K562 (cell line): ENCODE measurements at regions of chrX and their contacts with region 1.

Region 1: GRCh38 chrX:66022632-66023384 is 17.1 kb downstream of the VSIG4 start:
- DNase-seq: peak; percentile 45 to 73 (median 52)
- ATAC-seq: peak; percentile 62
- H3K4me3 ChIP-seq: no peak overlapping the region
- H3K27ac ChIP-seq: peak overlapping the region; percentile 52
- H3K4me1 ChIP-seq: peaks cover 13 to 54% of the 10 kb centered on the region in 2 experiments
- H3K27me3 ChIP-seq: no peaks in the 10 kb centered on the region
- CTCF ChIP-seq: peak; percentile 65 to 78 (median 72); a peak in 5 of 6 replicates
- EP300 ChIP-seq: peak; percentile 11; the same call in 1 of the 2 replicates
- POLR2A ChIP-seq: peak; percentile 57
- RAD21 ChIP-seq: peak; percentile 63 to 75

Region 2: DNA sequence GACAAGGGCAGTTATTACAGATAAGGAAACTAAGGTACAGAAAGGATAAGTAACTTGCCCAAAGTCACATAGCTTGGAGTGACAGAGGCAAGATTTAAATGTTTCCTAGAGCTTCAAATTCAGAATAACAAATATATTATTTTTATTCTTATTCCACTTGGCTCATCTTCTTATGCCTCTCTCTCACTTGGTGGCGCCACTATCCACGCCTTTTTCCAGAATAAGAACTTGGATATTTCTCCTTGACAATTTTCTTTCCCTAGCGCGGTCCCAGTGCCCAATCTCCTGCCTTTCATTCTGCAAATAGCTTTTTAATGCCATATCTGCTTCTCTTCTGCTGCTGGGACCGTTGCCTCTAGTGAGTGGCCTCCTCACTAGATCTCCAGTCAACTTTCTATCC is 276.8 kb before region 1 on chrX:
- CTCF ChIA-PET with region 1: no interaction called
- POLR2A ChIA-PET with region 1: no interaction called
- in situ Hi-C with region 1: no loop called
- intact Hi-C with region 1: loop called (anchors 1 kb)
- DNase-seq: peak in 1 of 4 experiments; percentile 56
- ATAC-seq: peak; percentile 63
- H3K4me3 ChIP-seq: no peak overlapping the region
- H3K27ac ChIP-seq: no peak overlapping the region
- H3K4me1 ChIP-seq: no peaks in the 10 kb centered on the region; a peak in 1 of 5 replicates
- H3K27me3 ChIP-seq: no peaks in the 10 kb centered on the region
- CTCF ChIP-seq: peak; percentile 39 to 68 (median 40); a peak in 4 of 6 replicates
- EP300 ChIP-seq: no peak
- POLR2A ChIP-seq: no peak
- RAD21 ChIP-seq: peak; percentile 53 to 71

Region 3: GRCh38 chrX:65900850-65901844 is 121.7 kb before region 1 on chrX:
- CTCF ChIA-PET with region 1: no interaction called
- POLR2A ChIA-PET with region 1: no interaction called
- in situ Hi-C with region 1: no loop called
- intact Hi-C with region 1: no loop called
- DNase-seq: no peak
- ATAC-seq: no peak
- H3K4me3 ChIP-seq: no peak overlapping the region
- H3K27ac ChIP-seq: no peak overlapping the region
- H3K4me1 ChIP-seq: no peaks in the 10 kb centered on the region; a peak in 1 of 5 replicates
- H3K27me3 ChIP-seq: no peaks in the 10 kb centered on the region
- CTCF ChIP-seq: no peak
- EP300 ChIP-seq: no peak
- POLR2A ChIP-seq: no peak
- RAD21 ChIP-seq: no peak

Region 4: DNA sequence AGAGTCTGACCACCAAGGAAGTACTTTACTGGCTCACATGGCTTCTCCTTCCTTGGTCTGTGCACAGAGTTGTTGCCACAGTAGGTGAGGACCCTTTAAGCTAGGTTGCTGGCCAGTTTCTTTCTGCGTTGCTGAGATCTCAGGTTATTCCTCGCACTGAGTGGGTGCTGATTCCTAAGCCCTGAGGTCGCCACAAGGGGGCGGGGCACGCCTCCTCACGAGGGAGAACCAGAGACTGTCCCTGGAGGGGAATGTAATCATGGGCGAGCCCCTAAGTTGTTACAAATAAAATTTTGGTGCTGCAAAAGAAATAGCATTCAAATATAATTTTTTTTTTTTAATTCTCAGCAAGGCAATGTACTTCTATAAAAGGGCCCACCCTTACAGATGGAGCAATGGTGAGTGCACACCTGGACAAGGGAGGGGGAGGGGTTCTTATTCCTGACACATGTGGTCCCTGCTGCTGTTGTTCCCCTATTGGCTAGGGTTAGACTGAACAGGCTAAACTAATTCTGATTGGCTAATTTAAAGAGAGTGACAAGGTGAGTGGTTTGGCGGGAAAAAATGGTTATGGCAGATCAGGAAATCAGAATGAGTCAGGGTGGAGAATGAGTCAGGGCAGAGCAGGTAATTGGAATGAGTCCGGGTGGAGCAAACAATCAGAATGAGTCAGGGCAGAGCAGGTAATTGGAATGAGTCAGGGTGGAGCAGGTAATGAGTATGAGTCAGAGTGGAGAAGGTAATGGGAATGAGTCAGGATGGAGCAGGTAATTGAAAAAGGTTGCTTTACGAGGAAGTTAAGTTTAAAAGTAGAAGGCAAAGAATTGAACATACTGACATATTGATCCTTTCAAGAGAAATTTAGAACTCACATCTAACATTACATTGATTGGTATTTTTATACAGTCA is 90.4 kb before region 1 on chrX:
- CTCF ChIA-PET with region 1: no interaction called
- POLR2A ChIA-PET with region 1: no interaction called
- in situ Hi-C with region 1: no loop called
- intact Hi-C with region 1: loop called (anchors 2 kb)
- DNase-seq: peak in 3 of 4 experiments; percentile 9 to 67 (median 17)
- ATAC-seq: peak; percentile 97
- H3K4me3 ChIP-seq: no peak overlapping the region
- H3K27ac ChIP-seq: no peak overlapping the region; the same call in 2 of the 3 replicates
- H3K4me1 ChIP-seq: no peaks in the 10 kb centered on the region; a peak in 1 of 5 replicates
- H3K27me3 ChIP-seq: no peaks in the 10 kb centered on the region
- CTCF ChIP-seq: peak; percentile 38 to 55 (median 39); a peak in 4 of 6 replicates
- EP300 ChIP-seq: no peak
- POLR2A ChIP-seq: no peak
- RAD21 ChIP-seq: peak; percentile 17 to 55; a peak in 2 of 4 replicates

Region 5: DNA sequence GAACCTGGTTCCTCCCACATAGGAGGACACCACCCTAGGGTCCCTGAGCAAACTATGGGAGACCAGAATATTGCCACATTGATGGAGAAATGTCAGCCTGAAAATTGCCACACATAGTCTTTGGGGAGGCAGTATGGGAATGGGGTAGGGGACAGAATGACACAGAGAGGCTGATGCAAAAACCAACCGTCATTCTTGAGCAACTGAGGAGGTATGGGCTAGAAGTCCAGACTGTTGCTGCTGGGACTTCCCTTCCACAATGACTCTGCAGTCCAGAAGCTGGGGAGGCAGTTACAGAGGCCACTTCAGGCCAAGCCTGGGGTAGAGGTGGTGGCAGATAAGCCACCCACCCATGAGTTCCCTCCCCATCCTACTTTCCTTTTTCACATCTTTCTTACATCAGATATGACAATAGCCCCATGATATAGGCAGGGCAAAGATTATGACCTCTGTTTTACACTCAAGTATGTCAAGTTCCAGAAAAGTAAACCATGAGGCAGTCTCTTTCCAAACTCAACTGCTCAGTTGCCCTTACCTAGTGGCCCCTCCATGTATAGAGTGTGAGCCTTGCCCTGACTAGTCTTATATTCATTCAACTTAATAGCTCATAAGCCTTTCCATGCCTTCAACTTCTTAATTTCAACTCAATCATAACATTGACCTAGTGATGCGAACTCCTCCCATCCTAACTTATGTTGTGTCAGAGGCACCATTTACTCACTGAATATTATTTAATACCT is 24.7 kb before region 1 on chrX:
- CTCF ChIA-PET with region 1: no interaction called
- POLR2A ChIA-PET with region 1: interaction called, 49 read pairs
- in situ Hi-C with region 1: no loop called
- intact Hi-C with region 1: no loop called
- DNase-seq: peak; percentile 81 to 94 (median 84)
- ATAC-seq: peak; percentile 80
- H3K4me3 ChIP-seq: no peak overlapping the region
- H3K27ac ChIP-seq: peak overlapping the region; percentile 99
- H3K4me1 ChIP-seq: peaks cover 5 to 78% of the 10 kb centered on the region in 2 experiments; a peak in 4 of 5 replicates
- H3K27me3 ChIP-seq: no peaks in the 10 kb centered on the region
- CTCF ChIP-seq: no peak
- EP300 ChIP-seq: peak; percentile 100
- POLR2A ChIP-seq: peak; percentile 78
- RAD21 ChIP-seq: peak; percentile 10 to 42; a peak in 2 of 4 replicates

Region 6: DNA sequence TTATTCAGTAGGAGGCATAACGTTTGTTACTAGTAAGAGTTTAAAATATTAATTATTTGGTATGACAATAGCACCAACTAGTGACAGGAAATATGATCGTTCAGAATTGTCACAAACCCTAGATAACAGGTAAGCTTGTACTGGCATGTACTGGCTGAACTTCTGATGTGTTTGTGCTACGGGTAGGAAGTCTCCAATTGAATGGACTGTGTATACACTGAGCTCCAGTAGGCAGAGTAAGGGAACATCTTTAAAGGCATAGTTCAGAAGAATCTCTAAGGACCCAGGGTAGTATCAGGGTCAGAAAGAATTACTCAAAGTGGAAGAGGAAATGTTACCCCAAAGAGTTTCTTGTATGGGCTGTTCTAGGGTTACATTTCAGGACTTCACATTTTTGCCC is 385.7 kb after region 1 on chrX:
- CTCF ChIA-PET with region 1: no interaction called
- POLR2A ChIA-PET with region 1: interaction called, 5 read pairs
- in situ Hi-C with region 1: no loop called
- intact Hi-C with region 1: loop called (anchors 5 kb)
- DNase-seq: peak; percentile 3 to 15 (median 4)
- ATAC-seq: peak; percentile 71
- H3K4me3 ChIP-seq: no peak overlapping the region
- H3K27ac ChIP-seq: no peak overlapping the region
- H3K4me1 ChIP-seq: no peaks in the 10 kb centered on the region
- H3K27me3 ChIP-seq: no peaks in the 10 kb centered on the region; a peak in 1 of 5 replicates
- CTCF ChIP-seq: peak in 2 of 3 experiments; percentile 13 to 56; a peak in 2 of 6 replicates
- EP300 ChIP-seq: no peak
- POLR2A ChIP-seq: no peak
- RAD21 ChIP-seq: peak in 1 of 2 experiments; percentile 54; a peak in 3 of 4 replicates

Region 7: GRCh38 chrX:66728818-66729271 is 706.0 kb after region 1 on chrX:
- CTCF ChIA-PET with region 1: interaction called, 4 read pairs
- POLR2A ChIA-PET with region 1: no interaction called
- in situ Hi-C with region 1: no loop called
- intact Hi-C with region 1: loop called (anchors 10 kb)
- DNase-seq: peak; percentile 55 to 72 (median 58)
- ATAC-seq: peak; percentile 100
- H3K4me3 ChIP-seq: peak overlapping the region; percentile 55
- H3K27ac ChIP-seq: peak overlapping the region; percentile 78
- H3K4me1 ChIP-seq: no peaks in the 10 kb centered on the region
- H3K27me3 ChIP-seq: no peaks in the 10 kb centered on the region
- CTCF ChIP-seq: peak; percentile 57 to 88 (median 64)
- EP300 ChIP-seq: no peak
- POLR2A ChIP-seq: no peak
- RAD21 ChIP-seq: peak; percentile 49 to 63